ENCODE measurements at regions of chr4 and their contacts with region 1.

Region 1: DNA sequence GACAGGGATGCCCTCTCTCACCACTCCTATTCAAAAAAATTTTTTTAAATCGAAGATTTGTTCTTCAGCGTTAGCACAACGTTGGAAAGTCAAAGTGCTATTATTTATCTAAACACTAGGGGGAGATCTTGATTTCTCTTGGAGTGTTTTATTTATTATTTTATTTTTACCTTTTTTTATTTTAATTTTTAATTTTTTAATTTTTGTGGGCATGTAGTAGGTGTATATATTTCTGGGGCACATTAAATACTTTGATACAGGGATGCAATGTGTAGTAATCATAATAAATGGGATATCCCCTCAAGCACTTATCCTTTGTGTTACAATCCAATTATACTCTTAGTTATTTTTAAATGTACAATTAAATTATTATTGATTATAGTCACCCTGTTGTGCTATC is 37.4 kb upstream of the SLC10A4 start:
- DNase-seq: no peak
- ATAC-seq: no peak
- H3K4me3 ChIP-seq: no peak overlapping the region
- H3K27ac ChIP-seq: no peak overlapping the region
- H3K4me1 ChIP-seq: no peaks in the 10 kb centered on the region
- H3K27me3 ChIP-seq: no peaks in the 10 kb centered on the region
- CTCF ChIP-seq: peak; percentile 52

Region 2: DNA sequence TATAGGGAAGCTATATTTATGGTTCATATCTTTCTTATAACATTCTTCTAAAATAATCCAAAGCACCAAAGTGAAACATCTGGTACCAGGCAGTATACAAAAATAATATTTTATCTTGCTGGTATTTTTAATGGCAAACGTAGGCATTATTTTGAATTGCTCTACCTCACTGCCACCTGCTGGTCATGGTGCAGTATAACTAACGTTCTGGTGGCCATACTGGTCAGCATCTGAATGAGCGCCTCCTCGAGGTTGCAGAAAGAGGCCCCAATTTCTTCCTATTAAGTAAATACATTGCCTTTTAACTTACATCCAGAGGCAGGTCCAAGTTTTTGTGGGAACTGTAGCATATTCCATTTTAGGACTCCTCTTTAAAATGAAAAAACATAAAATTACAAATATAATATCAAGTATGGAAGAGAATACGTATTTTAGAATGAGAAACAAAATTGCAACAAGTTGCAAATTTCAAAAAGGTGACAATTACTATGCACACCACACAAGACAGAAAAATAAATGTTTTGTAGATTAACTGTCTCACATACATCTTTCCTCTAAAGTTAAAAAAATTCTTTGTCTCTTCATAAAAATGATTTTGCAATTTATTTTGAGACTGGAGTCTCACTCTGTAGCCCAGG is 517.5 kb after region 1 on chr4:
- intact Hi-C with region 1: loop called in 1 of 2 experiments (anchors 10 kb)
- DNase-seq: peak; percentile 31 to 62
- ATAC-seq: peak; percentile 74 to 92 (median 86)
- H3K4me3 ChIP-seq: no peak overlapping the region
- H3K27ac ChIP-seq: no peak overlapping the region
- H3K4me1 ChIP-seq: no peaks in the 10 kb centered on the region
- H3K27me3 ChIP-seq: no peaks in the 10 kb centered on the region
- CTCF ChIP-seq: peak; percentile 95